Activated CD8-positive, alpha-beta T cell treated with anti-CD3 and anti-CD28 coated beads for 36 hours (primary cell): ENCODE measurements at regions of chr9 and their contacts with region 1.

Region 1: GRCh38 chr9:27333241-27334052 is 36.5 kb upstream of the EQTN start:
- DNase-seq: peak; percentile 54
- ATAC-seq: peak; percentile 79
- H3K4me3 Mint-ChIP-seq: no peak overlapping the region
- H3K27ac Mint-ChIP-seq: no peak overlapping the region
- H3K4me1 Mint-ChIP-seq: no peaks in the 10 kb centered on the region
- H3K27me3 Mint-ChIP-seq: peaks cover 3% of the 10 kb centered on the region
- CTCF ChIP-seq: peak; percentile 90

Region 2: GRCh38 chr9:27276193-27277030 is 57.0 kb before region 1 on chr9:
- CTCF ChIA-PET with region 1: no interaction called
- POLR2A ChIA-PET with region 1: no interaction called
- intact Hi-C with region 1: loop called (anchors 5 kb)
- DNase-seq: no peak
- ATAC-seq: no peak
- H3K4me3 Mint-ChIP-seq: no peak overlapping the region
- H3K27ac Mint-ChIP-seq: no peak overlapping the region
- H3K4me1 Mint-ChIP-seq: peaks cover 2% of the 10 kb centered on the region
- H3K27me3 Mint-ChIP-seq: peaks cover 9% of the 10 kb centered on the region
- CTCF ChIP-seq: peak; percentile 92

Region 3: GRCh38 chr9:27353474-27354229 is 20.2 kb after region 1 on chr9:
- CTCF ChIA-PET with region 1: interaction called, 10 read pairs
- POLR2A ChIA-PET with region 1: no interaction called
- intact Hi-C with region 1: no loop called
- DNase-seq: peak; percentile 7
- ATAC-seq: peak; percentile 65
- H3K4me3 Mint-ChIP-seq: no peak overlapping the region
- H3K27ac Mint-ChIP-seq: no peak overlapping the region
- H3K4me1 Mint-ChIP-seq: peaks cover 14% of the 10 kb centered on the region
- H3K27me3 Mint-ChIP-seq: no peaks in the 10 kb centered on the region
- CTCF ChIP-seq: no peak

Region 4: GRCh38 chr9:27529316-27530278 is 196.2 kb after region 1 on chr9 and contains the start of gene MOB3B:
- CTCF ChIA-PET with region 1: interaction called, 65 read pairs
- POLR2A ChIA-PET with region 1: no interaction called
- intact Hi-C with region 1: loop called (anchors 1 kb)
- DNase-seq: peak; percentile 82
- ATAC-seq: peak; percentile 90
- H3K4me3 Mint-ChIP-seq: peak within 1 kb of the TSS; percentile 82
- H3K27ac Mint-ChIP-seq: peak within 1 kb of the TSS; percentile 66
- H3K4me1 Mint-ChIP-seq: peaks cover 10% of the 10 kb centered on the region
- H3K27me3 Mint-ChIP-seq: peaks cover 13% of the 10 kb centered on the region
- CTCF ChIP-seq: peak; percentile 84
- total RNA-seq, gene MOB3B: 0.47 to 0.67 TPM

Region 5: DNA sequence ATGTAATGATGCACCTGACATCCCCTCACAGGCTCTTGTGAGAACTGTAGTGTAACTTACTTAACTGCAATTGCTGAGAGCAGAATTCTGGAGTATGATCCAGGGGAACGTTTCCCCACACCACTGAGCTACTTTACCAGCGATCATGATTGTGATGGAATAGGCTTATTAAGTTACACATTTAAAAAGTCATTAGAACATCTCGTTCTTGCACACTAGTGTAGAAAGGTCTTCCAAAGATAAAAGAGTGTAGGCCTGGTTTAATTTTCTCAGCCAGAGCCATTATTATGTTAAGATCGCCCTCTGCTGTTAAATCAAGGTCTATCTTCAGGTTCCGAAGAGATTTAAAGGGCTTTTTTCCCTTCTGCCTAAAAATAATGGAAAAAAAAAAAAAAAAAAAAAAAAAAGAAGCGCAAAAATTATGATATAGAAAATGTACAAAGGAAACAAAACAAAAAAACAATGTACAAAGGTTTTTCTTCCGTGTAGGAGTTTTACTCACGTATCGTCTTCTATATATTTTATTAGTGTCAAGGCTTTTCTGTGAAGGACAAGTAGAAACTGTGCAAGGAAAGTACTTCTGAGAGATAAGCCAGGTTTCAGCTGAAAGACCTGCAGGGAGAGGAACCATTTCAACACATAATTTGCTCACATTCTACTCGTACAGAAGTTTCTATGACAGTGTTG is 214.8 kb after region 1 on chr9:
- CTCF ChIA-PET with region 1: interaction called, 33 read pairs
- POLR2A ChIA-PET with region 1: no interaction called
- intact Hi-C with region 1: loop called (anchors 5 kb)
- DNase-seq: no peak
- ATAC-seq: no peak
- H3K4me3 Mint-ChIP-seq: no peak overlapping the region
- H3K27ac Mint-ChIP-seq: no peak overlapping the region
- H3K4me1 Mint-ChIP-seq: no peaks in the 10 kb centered on the region
- H3K27me3 Mint-ChIP-seq: no peaks in the 10 kb centered on the region
- CTCF ChIP-seq: peak; percentile 52